HEK293 (cell line): ENCODE measurements at regions of chr13 and their contacts with region 1.

Region 1: GRCh38 chr13:27826379-27827353 is 34.4 kb downstream of the GSX1 start:
- H3K4me3 ChIP-seq: peak overlapping the region; percentile 20
- H3K27ac ChIP-seq: no peak overlapping the region
- H3K4me1 ChIP-seq: no peaks in the 10 kb centered on the region
- CTCF ChIP-seq: no peak; the same call in 1 of the 2 replicates

Region 2: GRCh38 chr13:26946684-26947343 is 879.9 kb before region 1 on chr13:
- CTCF ChIA-PET with region 1: interaction called, 10 read pairs
- POLR2A ChIA-PET with region 1: no interaction called
- H3K4me3 ChIP-seq: no peak overlapping the region
- H3K27ac ChIP-seq: no peak overlapping the region
- H3K4me1 ChIP-seq: peaks cover 7% of the 10 kb centered on the region; the same call in 1 of the 2 replicates
- CTCF ChIP-seq: peak; percentile 80

Region 3: GRCh38 chr13:27374650-27375049 is 452.0 kb before region 1 on chr13:
- CTCF ChIA-PET with region 1: interaction called, 34 read pairs
- POLR2A ChIA-PET with region 1: no interaction called
- H3K4me3 ChIP-seq: no peak overlapping the region
- H3K27ac ChIP-seq: no peak overlapping the region
- H3K4me1 ChIP-seq: no peaks in the 10 kb centered on the region
- CTCF ChIP-seq: no peak; the same call in 1 of the 2 replicates

Region 4: DNA sequence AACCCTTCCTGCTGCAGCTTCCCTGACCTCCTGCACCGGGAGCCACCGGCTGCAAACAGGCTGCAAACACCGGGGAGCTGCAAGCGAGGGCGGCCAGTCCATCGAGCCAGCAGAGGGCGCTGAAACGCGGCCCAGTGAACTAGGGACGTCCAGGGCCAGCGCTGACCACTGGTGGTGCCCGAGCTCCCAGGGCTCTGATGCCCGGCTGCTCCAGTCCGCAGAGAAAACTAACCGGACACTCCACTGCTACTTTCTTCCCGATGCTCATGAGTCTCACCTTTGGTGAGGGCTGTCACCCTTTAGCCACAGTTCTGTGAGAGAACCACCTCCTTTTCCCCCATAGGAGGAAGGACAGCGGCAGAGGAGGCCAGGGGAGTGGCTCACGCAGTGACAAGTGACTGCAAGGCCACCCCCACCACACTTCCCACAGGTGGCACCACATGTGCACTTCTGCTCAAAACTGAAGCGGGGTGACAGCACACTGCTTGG is 293.5 kb before region 1 on chr13:
- CTCF ChIA-PET with region 1: interaction called, 32 read pairs
- POLR2A ChIA-PET with region 1: no interaction called
- H3K4me3 ChIP-seq: no peak overlapping the region; the same call in none of the 2 replicates
- H3K27ac ChIP-seq: no peak overlapping the region
- H3K4me1 ChIP-seq: no peaks in the 10 kb centered on the region
- CTCF ChIP-seq: peak; percentile 93

Region 5: DNA sequence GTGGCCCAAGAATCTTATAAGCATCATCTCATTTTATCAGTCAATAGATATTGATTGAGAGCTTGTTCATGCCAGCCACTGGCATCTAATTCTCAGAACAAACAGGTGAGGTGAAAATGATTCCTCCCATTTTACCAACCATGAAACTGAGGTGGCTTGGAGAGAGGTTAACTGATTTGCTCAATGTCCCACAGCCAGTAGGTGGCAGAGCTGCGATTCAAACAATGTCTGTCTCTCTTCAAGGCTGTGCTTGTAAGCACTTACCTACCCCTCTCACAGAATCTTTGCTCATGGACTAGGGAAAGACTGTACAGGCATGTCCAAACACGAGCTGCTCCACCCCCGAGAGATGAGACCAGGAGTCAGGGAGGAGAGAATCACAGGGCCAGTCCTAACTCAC is 55.9 kb before region 1 on chr13:
- CTCF ChIA-PET with region 1: interaction called, 23 read pairs
- POLR2A ChIA-PET with region 1: no interaction called
- H3K4me3 ChIP-seq: no peak overlapping the region
- H3K27ac ChIP-seq: no peak overlapping the region
- H3K4me1 ChIP-seq: no peaks in the 10 kb centered on the region
- CTCF ChIP-seq: peak; percentile 34

Region 6: DNA sequence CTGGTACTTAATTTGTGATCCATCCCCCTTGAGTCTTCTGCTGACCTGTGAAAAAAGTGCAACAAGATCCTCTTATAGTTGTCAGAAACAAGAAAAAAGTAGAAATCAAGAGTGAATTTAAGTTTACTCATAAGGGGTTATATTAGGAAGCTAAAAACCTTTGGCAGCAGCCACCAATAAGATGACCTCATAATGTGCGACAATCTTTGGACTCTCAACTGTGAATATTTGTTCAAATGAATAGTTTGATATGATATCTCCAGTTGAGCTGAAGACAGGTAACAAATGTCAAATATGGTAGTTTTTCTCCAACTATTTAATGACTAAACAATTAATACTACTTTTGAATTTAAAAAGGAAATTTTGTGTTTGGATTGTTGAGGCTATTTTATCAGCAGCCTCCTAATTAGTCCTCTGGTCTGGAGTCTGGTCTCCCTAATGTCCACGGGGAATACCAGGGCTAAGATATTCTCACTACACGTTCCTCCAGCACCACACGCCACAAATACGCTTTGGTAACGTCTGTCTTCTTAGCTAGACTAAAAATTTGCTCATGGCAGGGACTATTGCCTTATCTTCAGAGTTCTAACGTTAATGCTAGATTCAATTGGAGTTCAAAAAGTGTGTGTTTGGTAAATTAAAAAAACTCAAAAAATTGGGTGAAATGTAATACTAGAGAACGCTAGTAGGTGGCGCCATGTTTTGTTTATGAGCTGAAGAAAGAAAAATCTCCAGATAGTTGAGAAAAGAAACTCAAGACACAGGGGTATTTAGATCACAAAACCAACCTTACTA is 42.2 kb after region 1 on chr13:
- CTCF ChIA-PET with region 1: interaction called, 14 read pairs
- POLR2A ChIA-PET with region 1: no interaction called
- H3K4me3 ChIP-seq: no peak overlapping the region
- H3K27ac ChIP-seq: no peak overlapping the region
- H3K4me1 ChIP-seq: no peaks in the 10 kb centered on the region
- CTCF ChIP-seq: no peak

Region 7: DNA sequence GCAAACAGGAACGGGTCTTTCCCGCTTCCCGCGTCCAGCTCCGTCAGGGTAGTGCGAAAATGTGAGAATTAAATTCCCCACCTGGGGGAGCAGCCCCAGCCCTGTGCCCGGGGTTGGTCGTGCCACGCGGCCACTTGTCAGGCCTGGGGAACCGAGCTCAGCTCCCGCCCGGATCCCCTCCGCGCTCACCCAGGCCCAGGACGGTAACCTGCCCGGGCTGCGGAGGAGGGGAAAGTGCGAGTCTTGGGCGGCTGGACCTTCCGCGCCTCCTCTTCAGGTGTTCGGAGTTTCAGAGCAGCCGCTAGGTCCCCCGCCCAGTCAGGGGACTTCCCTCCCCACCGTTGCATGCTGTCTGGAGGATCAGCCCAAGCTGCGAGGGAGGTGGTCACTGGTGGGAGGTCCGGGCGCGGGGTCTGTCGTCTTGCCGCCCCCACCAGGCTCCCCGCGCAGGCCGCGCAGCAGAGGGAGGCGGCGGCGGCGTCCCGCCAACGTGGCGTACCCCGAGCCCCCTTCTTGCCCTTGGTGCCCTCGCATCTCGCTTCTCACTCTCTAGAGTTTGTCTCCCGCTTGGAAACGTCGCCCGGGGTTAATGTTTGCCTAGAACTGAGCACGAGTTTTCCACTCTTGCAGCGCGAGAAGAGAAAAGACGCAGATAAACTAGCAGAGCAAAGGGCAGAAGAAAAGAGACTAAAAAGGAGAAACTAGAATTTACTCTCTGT is 153.8 kb after region 1 on chr13:
- CTCF ChIA-PET with region 1: interaction called, 71 read pairs
- POLR2A ChIA-PET with region 1: interaction called, 5 read pairs
- H3K4me3 ChIP-seq: no peak overlapping the region
- H3K27ac ChIP-seq: no peak overlapping the region
- H3K4me1 ChIP-seq: no peaks in the 10 kb centered on the region
- CTCF ChIP-seq: no peak

Region 8: DNA sequence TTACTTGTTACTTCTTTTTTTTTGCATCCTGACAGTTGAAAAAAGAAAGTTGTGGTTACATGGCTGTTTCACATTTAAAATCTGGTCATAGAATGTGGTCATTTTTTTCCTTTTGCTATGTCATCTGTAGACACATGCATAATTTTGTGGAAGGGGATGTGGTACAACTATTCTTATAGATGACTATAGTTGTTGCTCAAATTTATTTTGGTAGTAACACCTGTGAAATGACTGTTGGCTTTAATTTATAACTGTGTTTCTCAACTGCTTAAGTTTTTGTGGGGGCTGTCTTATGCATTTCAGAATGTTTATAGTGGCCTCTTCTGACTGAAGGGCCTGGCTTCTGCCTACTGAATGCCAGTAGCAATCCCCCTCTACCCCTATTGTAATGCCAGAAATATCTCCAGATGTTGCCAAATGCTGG is 442.1 kb after region 1 on chr13:
- CTCF ChIA-PET with region 1: no interaction called
- POLR2A ChIA-PET with region 1: no interaction called
- H3K4me3 ChIP-seq: no peak overlapping the region
- H3K27ac ChIP-seq: no peak overlapping the region
- H3K4me1 ChIP-seq: no peaks in the 10 kb centered on the region
- CTCF ChIP-seq: no peak